ENCODE measurements at regions of chr20 and their contacts with region 1.

Region 1: GRCh38 chr20:9978397-9979004 is 56.3 kb upstream of the ANKEF1 start:
- DNase-seq: peak; percentile 57
- H3K4me3 Mint-ChIP-seq: no peak overlapping the region
- H3K27ac Mint-ChIP-seq: no peak overlapping the region
- H3K4me1 Mint-ChIP-seq: peaks cover 2% of the 10 kb centered on the region
- H3K27me3 Mint-ChIP-seq: peaks cover 2% of the 10 kb centered on the region

Region 2: GRCh38 chr20:9829835-9830234 is 148.7 kb before region 1 on chr20:
- CTCF ChIA-PET with region 1: no interaction called
- intact Hi-C with region 1: no loop called
- DNase-seq: no peak
- H3K4me3 Mint-ChIP-seq: no peak overlapping the region
- H3K27ac Mint-ChIP-seq: no peak overlapping the region
- H3K4me1 Mint-ChIP-seq: no peaks in the 10 kb centered on the region
- H3K27me3 Mint-ChIP-seq: peaks cover 2% of the 10 kb centered on the region

Region 3: GRCh38 chr20:10090588-10091166 is 112.2 kb after region 1 on chr20:
- CTCF ChIA-PET with region 1: interaction called, 64 read pairs
- intact Hi-C with region 1: loop called (anchors 1 kb)
- DNase-seq: peak; percentile 27
- H3K4me3 Mint-ChIP-seq: no peak overlapping the region
- H3K27ac Mint-ChIP-seq: no peak overlapping the region
- H3K4me1 Mint-ChIP-seq: no peaks in the 10 kb centered on the region
- H3K27me3 Mint-ChIP-seq: peaks cover 3% of the 10 kb centered on the region

Region 4: DNA sequence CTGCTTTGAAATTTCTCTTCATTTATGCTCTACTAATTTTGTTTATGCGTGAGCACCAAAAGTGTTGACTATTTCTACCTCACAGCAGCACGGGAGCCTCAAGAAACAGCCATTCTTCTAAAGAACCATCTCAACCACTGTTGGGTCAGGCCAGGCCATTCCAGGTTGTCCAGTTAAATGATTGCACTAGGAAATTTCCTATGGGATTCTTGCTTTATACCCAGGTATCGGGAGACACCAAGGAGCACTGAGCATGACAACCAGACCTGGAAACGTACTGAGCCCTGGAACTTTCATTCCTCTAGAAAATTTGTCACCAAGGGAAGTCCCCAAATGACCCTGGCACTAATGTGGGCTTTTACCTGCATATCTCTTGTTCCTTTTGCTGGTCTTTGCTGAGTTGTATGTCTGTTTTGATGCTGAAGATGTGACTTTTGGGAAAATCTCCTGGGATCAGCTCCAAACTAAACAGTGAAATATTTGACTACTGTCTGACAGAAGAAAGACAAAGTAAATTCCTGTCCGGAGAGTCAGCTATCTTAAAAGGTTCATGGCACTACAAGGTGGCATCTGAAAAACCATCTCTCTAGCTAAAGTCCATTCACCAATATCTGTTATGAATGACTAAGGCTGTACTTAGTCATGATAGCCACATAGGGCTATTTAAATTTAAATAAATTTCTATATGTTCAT is 310.6 kb after region 1 on chr20:
- CTCF ChIA-PET with region 1: no interaction called
- intact Hi-C with region 1: no loop called
- DNase-seq: no peak
- H3K4me3 Mint-ChIP-seq: no peak overlapping the region
- H3K27ac Mint-ChIP-seq: no peak overlapping the region
- H3K4me1 Mint-ChIP-seq: no peaks in the 10 kb centered on the region
- H3K27me3 Mint-ChIP-seq: peaks cover 5% of the 10 kb centered on the region

Region 5: DNA sequence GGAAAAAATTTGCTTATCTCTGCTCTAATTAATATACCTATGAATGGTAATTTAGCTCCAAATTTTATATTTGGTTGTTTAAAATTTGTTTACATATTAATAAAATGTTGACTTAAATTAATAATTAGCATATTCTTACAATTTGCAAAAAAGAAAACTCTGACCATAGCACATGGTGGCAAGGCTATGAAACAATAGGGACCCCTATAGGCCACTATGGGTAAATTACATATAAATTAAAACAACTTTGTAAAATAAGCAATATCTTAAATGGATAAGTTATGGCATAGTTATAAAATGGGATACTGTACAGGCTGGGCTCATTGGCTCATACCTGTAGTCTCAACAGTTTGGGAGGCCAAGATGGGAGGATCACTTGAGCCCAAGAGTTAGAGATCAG is 379.5 kb after region 1 on chr20:
- CTCF ChIA-PET with region 1: interaction called, 3 read pairs
- intact Hi-C with region 1: loop called (anchors 1 kb)
- DNase-seq: no peak
- H3K4me3 Mint-ChIP-seq: no peak overlapping the region
- H3K27ac Mint-ChIP-seq: no peak overlapping the region
- H3K4me1 Mint-ChIP-seq: peaks cover 3% of the 10 kb centered on the region
- H3K27me3 Mint-ChIP-seq: peaks cover 9% of the 10 kb centered on the region

Region 6: GRCh38 chr20:10536531-10536930 is 558.0 kb after region 1 on chr20:
- CTCF ChIA-PET with region 1: interaction called, 3 read pairs
- intact Hi-C with region 1: loop called (anchors 5 kb)
- DNase-seq: peak; percentile 41
- H3K4me3 Mint-ChIP-seq: no peak overlapping the region
- H3K27ac Mint-ChIP-seq: no peak overlapping the region
- H3K4me1 Mint-ChIP-seq: peaks cover 18% of the 10 kb centered on the region
- H3K27me3 Mint-ChIP-seq: no peaks in the 10 kb centered on the region

Region 7: GRCh38 chr20:11274141-11274594 is 1295.7 kb after region 1 on chr20:
- CTCF ChIA-PET with region 1: no interaction called
- intact Hi-C with region 1: loop called (anchors 5 kb)
- DNase-seq: no peak
- H3K4me3 Mint-ChIP-seq: no peak overlapping the region
- H3K27ac Mint-ChIP-seq: no peak overlapping the region
- H3K4me1 Mint-ChIP-seq: no peaks in the 10 kb centered on the region
- H3K27me3 Mint-ChIP-seq: no peaks in the 10 kb centered on the region